Left cardiac atrium (tissue), 4 donors: ENCODE measurements at regions of chr15 and their contacts with region 1.

Region 1: DNA sequence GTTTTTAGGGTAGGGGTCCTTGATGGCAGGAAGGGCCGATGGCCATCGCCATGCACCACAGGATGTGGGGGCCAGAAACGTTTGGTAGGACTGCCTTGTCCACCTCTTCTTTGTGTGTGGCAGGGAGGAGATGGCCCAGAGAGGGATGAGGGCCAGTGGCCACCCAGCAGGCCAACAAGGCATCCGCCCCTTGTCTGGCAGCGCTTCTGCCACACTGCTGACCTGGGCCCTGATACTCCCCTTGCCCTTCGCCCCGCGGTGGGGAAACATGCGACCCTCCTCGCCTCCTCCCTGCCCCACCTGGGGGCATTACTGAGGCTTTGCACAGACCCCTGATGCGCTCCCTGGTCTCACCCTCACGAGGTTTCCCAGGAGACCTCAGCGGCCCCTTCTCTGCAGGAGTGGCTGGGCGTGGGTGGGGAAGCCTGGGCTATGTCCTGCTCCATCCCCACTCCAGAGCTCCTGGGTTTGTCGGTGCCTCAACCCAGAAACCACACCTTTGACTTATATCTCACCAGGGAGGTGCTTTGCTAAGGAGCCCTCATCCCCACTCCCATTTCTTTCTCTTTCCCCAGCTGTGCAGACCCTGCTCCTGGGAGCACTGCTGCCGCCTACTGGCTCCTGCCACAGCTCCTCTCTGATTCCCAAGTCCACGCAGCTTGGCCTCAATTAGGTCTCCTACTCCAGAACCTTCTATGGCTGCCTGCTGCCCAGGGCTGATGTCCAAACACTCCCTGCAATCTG is 38.7 kb downstream of the FEM1B start:
- DNase-seq: no peak
- ATAC-seq: no peak

Region 2: GRCh38 chr15:68249058-68249713 is 67.0 kb before region 1 on chr15:
- intact Hi-C with region 1: no loop called
- DNase-seq: no peak
- ATAC-seq: peak in 1 of 2 donors; percentile 29

Region 3: GRCh38 chr15:68365140-68365745 is 49.0 kb after region 1 on chr15:
- intact Hi-C with region 1: loop called in 1 of 2 experiments (anchors 5 kb)
- DNase-seq: no peak
- ATAC-seq: peak; percentile 67 to 79